ENCODE measurements at regions of chr3 and their contacts with region 1.

Region 1: GRCh38 chr3:151282921-151283320 is 4.6 kb upstream of the P2RY14 start:
- DNase-seq: no peak
- H3K4me3 Mint-ChIP-seq: no peak overlapping the region
- H3K27ac Mint-ChIP-seq: peak overlapping the region; percentile 38
- H3K4me1 Mint-ChIP-seq: peaks cover 56% of the 10 kb centered on the region
- H3K27me3 Mint-ChIP-seq: no peaks in the 10 kb centered on the region

Region 2: DNA sequence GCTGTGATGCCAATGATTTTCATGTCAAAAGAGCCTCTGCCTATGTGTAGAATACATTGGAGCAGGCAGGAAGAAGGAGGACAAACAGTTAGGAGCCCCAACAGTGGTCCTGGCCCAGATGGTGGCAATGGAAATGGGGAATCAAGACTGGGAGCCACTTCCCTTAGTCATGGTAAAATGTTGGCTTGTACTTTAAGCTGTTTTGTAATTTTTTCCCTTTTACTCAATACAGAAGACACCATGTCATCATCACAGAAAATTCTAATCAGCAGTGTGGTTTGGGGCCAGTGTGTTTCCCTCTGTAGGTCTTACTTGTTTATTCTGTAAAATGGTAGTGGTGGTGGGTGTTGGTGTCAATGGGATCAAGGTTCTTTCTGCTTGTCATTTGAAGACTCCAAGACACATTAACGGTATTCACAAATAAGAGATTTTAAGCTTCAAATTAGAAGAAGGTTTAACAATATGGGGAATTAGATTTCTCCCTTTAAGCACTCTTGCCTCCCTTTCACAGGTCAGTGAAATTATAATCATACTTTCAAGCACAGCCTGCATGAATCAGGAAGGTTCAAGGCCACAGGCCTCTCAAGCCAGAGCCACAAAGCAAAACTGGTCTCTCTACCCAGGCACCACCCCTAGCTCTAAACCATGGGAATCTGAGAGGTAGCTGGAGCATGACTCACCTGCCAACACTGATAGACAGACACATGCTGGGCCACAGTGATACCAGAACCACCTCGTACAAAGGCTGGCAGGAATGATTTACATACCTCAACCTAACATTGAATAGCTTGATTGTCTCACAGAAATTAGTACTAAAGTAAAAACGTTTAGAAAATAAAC is 544.8 kb before region 1 on chr3:
- intact Hi-C with region 1: loop called (anchors 1 kb)
- DNase-seq: no peak
- H3K4me3 Mint-ChIP-seq: peak overlapping the region; percentile 42
- H3K27ac Mint-ChIP-seq: peak overlapping the region; percentile 92
- H3K4me1 Mint-ChIP-seq: peaks cover 93% of the 10 kb centered on the region
- H3K27me3 Mint-ChIP-seq: no peaks in the 10 kb centered on the region

Region 3: DNA sequence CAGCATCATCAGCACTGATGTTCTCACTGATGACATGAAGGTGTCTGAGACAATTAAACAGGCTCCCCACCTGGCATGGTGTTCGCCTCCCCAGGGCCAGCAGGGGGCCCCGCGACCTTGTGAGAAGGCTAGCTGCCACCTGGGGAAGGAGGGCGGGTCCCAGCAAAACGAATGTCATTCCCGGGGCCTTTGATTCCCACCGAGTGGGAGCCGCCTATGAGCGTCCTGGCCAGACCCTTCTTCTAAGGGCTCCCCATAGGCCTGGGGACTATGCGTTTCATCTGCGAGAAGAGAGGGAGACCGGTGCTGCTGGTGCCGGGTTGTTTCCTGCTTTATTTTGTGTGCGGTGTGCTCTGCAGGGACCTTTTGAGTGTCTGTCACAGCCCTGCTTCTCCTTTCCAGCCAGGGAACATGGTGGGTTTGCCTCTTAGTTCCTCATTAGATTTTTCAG is 357.1 kb before region 1 on chr3:
- intact Hi-C with region 1: loop called (anchors 5 kb)
- DNase-seq: peak; percentile 27
- H3K4me3 Mint-ChIP-seq: peak overlapping the region; percentile 48
- H3K27ac Mint-ChIP-seq: no peak overlapping the region
- H3K4me1 Mint-ChIP-seq: peaks cover 9% of the 10 kb centered on the region
- H3K27me3 Mint-ChIP-seq: peaks cover 20% of the 10 kb centered on the region

Region 4: DNA sequence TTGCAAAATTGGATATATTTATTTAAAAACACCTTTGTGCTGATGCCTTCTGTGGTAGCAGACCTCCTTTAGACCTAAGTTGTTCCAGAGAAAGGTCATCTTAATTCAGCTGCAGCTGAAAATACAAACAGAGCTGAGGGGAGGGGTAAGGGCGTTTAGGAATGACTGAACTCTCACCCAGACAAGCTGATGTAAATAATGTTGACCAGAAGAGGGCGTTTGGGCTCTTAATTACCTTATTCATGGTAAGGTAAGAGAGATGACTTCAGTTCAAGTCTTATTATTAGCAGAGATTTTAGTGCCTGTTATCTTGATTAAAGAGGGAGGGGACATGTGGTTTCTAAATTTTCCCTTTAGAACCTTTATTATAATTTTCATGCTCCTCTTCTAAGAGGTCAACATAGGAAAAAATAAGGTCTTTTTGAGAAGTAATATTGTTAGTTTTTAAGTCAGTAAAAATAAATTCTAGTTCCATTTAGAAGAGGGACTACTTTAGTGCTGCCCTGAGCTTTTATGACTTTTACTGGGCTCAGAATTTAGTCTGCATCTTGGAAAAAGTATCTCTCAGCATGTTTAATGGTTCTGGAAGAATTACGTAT is 126.2 kb before region 1 on chr3:
- intact Hi-C with region 1: loop called (anchors 1 kb)
- DNase-seq: no peak
- H3K4me3 Mint-ChIP-seq: no peak overlapping the region
- H3K27ac Mint-ChIP-seq: no peak overlapping the region
- H3K4me1 Mint-ChIP-seq: no peaks in the 10 kb centered on the region
- H3K27me3 Mint-ChIP-seq: peaks cover 9% of the 10 kb centered on the region

Region 5: DNA sequence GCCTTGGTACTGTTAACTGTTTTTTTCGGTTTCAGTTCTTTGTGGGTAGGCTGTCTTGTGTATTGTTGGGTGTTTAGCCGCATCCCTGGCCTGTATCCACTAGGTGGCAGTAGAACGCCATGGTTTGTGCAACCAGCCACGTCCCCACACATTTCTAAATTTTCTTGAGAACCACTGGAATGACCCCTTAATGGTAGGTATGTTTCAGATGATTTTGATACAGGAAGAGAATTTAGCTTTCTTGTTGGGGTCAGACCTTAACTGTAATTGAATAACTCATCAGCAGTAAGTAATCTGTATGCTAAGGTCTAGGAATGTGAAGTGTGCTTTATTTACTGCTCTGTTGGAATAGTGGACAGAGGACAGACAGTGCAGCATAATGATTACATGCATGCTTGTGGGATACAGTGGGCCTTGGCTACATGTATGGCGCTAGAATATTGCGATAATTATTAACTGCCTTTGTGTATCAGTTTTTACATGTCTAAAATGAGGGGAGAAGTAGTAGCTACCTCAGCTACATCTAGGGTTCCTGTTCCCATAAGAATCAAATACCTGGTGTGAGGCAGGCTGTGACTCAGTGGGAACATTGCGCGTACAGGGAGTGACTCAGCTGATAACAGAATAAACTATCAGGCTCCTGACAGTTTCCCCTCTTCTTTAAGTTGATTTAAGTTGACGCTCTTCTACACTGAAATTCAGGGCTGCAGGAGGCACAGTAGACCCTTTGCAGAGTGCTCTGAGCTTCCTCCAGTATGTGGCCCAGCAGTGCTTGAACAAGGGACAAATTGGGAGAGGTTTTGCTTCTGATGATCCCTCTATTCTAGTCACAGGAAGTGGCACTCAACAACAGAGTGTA is 54.9 kb before region 1 on chr3:
- intact Hi-C with region 1: loop called (anchors 1 kb)
- DNase-seq: peak; percentile 75
- H3K4me3 Mint-ChIP-seq: peak overlapping the region; percentile 27
- H3K27ac Mint-ChIP-seq: peak overlapping the region; percentile 82
- H3K4me1 Mint-ChIP-seq: peaks cover 61% of the 10 kb centered on the region
- H3K27me3 Mint-ChIP-seq: no peaks in the 10 kb centered on the region

Region 6: GRCh38 chr3:151305101-151305750 is 22.3 kb after region 1 on chr3:
- intact Hi-C with region 1: loop called (anchors 1 kb)
- DNase-seq: no peak
- H3K4me3 Mint-ChIP-seq: peak overlapping the region; percentile 5
- H3K27ac Mint-ChIP-seq: peak overlapping the region; percentile 70
- H3K4me1 Mint-ChIP-seq: peaks cover 63% of the 10 kb centered on the region
- H3K27me3 Mint-ChIP-seq: peaks cover 3% of the 10 kb centered on the region

Region 7: GRCh38 chr3:151838583-151839312 is 555.8 kb after region 1 on chr3:
- intact Hi-C with region 1: loop called (anchors 2 kb)
- DNase-seq: no peak
- H3K4me3 Mint-ChIP-seq: no peak overlapping the region
- H3K27ac Mint-ChIP-seq: no peak overlapping the region
- H3K4me1 Mint-ChIP-seq: peaks cover 6% of the 10 kb centered on the region
- H3K27me3 Mint-ChIP-seq: peaks cover 23% of the 10 kb centered on the region

Measured in activated T-helper 1 cell treated with anti-CD3 and anti-CD28 coated beads, Interleukin-12 subunit alpha, Interleukin-12 subunit beta, Interleukin-2, Interleukin-4 antibody, amounts not matched to agents 30 ng/mL and 10 ng/mL and 1 ng/mL, durations not matched to agents 14 hours and 24 hours and 36 hours (primary cell).